PC-3 (cell line): ENCODE measurements at regions of chr4 and their contacts with region 1.

Region 1: GRCh38 chr4:183659029-183659871 is at the starts of genes RWDD4 and TRAPPC11:
- DNase-seq: peak; percentile 95
- ATAC-seq: peak; percentile 99
- H3K4me3 ChIP-seq: peak within 1 kb of the TSS; percentile 84
- H3K27ac ChIP-seq: peak within 1 kb of the TSS; percentile 47
- H3K4me1 ChIP-seq: peaks cover 9% of the 10 kb centered on the region
- H3K27me3 ChIP-seq: no peaks in the 10 kb centered on the region
- CTCF ChIP-seq: no peak
- total RNA-seq, gene RWDD4: 22.6 and 29.6 TPM in 2 replicates
- total RNA-seq, gene TRAPPC11: 19.7 and 20.0 TPM in 2 replicates

Region 2: DNA sequence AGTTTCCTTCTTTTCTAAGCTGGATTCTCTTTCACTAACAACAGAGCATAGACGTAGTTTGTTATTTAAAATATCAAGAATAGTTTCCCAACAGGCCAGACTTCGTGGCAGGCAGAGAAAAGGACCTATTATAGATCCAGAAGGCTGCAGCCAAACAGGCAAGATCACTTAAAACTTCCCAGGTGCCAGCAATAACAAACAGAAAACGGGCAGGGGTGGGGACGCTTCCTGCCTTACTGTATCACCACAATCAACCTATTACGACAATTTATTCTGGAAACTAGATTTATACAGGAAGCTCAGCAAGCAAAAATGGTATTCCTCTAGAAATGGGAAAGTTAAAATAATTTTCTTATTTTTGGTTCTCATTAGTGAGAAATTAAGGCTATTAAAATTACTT is 22.3 kb before region 1 on chr4:
- CTCF ChIA-PET with region 1: no interaction called
- POLR2A ChIA-PET with region 1: no interaction called
- intact Hi-C with region 1: loop called (anchors 2 kb)
- DNase-seq: peak; percentile 49
- ATAC-seq: peak; percentile 83
- H3K4me3 ChIP-seq: peak overlapping the region; percentile 36
- H3K27ac ChIP-seq: peak overlapping the region; percentile 71
- H3K4me1 ChIP-seq: peaks cover 26% of the 10 kb centered on the region
- H3K27me3 ChIP-seq: no peaks in the 10 kb centered on the region
- CTCF ChIP-seq: no peak

Region 3: GRCh38 chr4:183686461-183686860 is 27.2 kb after region 1 on chr4:
- CTCF ChIA-PET with region 1: no interaction called
- POLR2A ChIA-PET with region 1: no interaction called
- intact Hi-C with region 1: no loop called
- DNase-seq: no peak
- ATAC-seq: no peak
- H3K4me3 ChIP-seq: no peak overlapping the region
- H3K27ac ChIP-seq: no peak overlapping the region
- H3K4me1 ChIP-seq: no peaks in the 10 kb centered on the region
- H3K27me3 ChIP-seq: no peaks in the 10 kb centered on the region
- CTCF ChIP-seq: no peak

Region 4: DNA sequence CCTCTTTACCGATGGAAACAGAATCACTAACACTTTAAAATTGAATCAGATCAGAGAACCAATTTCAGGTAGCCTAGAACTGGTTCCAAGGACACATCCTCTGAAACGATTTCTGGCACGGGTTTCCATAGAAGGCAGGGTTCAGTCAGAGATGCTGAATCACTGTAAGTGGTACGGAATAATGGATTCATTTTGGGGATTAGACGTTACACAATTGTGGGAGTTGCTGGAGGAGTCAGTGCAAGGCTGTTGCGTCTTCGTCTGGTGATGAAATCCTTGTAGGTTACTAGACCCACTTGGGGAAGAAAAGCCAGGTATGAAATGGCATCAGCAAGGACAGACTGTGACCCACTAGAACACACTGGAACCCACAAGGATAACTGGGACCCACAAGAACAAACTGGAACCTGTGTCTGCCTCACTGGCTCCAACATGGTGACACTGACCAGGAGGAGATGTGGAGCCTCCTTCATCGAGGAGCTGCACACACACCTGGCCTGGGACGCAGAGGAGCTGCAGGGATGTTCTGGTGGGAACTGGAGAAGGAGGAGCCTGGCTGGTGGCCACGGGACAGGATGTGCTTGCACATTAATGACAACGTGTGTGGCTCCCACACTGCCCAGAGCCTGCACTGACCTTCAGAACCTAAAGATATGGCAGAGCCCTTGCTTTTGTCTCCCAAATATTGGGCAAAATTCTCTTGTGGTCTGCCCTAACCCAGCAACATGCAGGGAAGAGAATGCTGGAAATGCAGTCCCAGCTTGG is 104.9 kb after region 1 on chr4:
- CTCF ChIA-PET with region 1: no interaction called
- POLR2A ChIA-PET with region 1: no interaction called
- intact Hi-C with region 1: loop called (anchors 5 kb)
- DNase-seq: no peak
- ATAC-seq: no peak
- H3K4me3 ChIP-seq: no peak overlapping the region
- H3K27ac ChIP-seq: no peak overlapping the region
- H3K4me1 ChIP-seq: peaks cover 12% of the 10 kb centered on the region; the same call in 1 of the 2 replicates
- H3K27me3 ChIP-seq: no peaks in the 10 kb centered on the region
- CTCF ChIP-seq: no peak